ENCODE measurements at regions of chr11 and their contacts with region 1.

Region 1: DNA sequence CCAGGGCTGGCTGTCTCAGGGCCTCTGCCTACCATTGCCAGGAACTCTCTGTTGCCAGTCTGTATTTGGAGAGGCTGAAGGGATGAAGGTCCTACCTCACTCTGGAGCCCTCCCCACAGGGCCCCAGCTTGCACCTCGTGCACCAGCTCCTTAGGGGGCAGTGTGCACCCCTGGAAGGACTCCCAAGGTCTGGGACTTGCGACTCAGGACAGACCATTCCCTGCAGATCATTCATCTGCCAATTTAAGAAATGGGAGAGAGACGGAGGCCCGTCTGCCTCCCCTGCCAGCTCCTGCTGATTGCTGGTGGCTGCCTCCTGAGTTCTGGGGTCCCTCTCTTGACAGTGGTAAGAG is 27.5 kb upstream of the MALAT1 start:
- DNase-seq: peak; percentile 83 to 85
- H3K4me3 ChIP-seq: no peak overlapping the region
- H3K4me3 Mint-ChIP-seq: peak overlapping the region; percentile 56
- H3K27ac Mint-ChIP-seq: peak overlapping the region; percentile 96
- H3K4me1 ChIP-seq: peaks cover 35% of the 10 kb centered on the region
- H3K4me1 Mint-ChIP-seq: peaks cover 7% of the 10 kb centered on the region
- H3K27me3 ChIP-seq: no peaks in the 10 kb centered on the region
- H3K27me3 Mint-ChIP-seq: no peaks in the 10 kb centered on the region
- CTCF ChIP-seq: peak; percentile 72 to 81

Region 2: DNA sequence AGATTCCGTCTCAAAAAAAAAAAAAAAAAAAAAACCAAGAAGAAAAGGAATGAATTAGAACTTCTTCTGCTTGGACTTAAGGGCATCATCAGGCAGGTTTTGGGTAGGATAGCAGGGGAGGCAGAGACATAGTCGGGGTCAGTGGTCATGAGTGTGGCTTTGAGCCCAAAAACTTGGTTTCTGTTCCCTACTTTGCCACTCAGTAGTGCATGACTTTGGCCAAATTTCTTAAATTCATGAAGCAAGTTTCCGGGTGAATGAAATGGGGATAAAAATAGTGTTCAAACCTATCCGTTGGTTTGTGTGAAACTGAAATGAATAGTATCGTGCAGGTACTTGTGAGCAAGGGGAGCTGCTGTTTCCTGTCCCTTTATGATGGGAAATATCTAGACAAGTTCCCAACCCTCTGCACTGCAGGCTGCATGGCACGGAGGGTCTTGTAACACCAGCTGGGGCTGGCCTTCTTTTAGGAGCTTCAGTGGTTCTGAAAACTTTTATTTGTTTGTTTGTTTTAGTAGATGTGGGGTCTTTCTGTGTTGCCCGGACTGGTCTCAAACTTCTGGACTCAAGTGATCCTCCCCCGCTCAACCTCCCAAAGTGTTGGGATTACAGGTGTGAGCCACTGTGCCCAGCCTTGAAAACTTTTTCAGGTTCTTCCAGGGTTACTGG is 30.4 kb before region 1 on chr11:
- CTCF ChIA-PET with region 1: interaction called, 8 read pairs
- POLR2A ChIA-PET with region 1: interaction called, 3 read pairs
- intact Hi-C with region 1: loop called (anchors 1 kb)
- DNase-seq: no peak
- H3K4me3 ChIP-seq: no peak overlapping the region
- H3K4me3 Mint-ChIP-seq: peak overlapping the region; percentile 20
- H3K27ac Mint-ChIP-seq: peak overlapping the region; percentile 91
- H3K4me1 ChIP-seq: peaks cover 37% of the 10 kb centered on the region
- H3K4me1 Mint-ChIP-seq: peaks cover 47% of the 10 kb centered on the region
- H3K27me3 ChIP-seq: no peaks in the 10 kb centered on the region
- H3K27me3 Mint-ChIP-seq: no peaks in the 10 kb centered on the region
- CTCF ChIP-seq: no peak

Region 3: GRCh38 chr11:65487413-65488272 is 16.3 kb after region 1 on chr11:
- CTCF ChIA-PET with region 1: interaction called, 16 read pairs
- POLR2A ChIA-PET with region 1: interaction called, 177 read pairs
- intact Hi-C with region 1: loop called (anchors 1 kb)
- DNase-seq: peak; percentile 99 to 100
- H3K4me3 ChIP-seq: peak overlapping the region; percentile 5
- H3K4me3 Mint-ChIP-seq: peak overlapping the region; percentile 74
- H3K27ac Mint-ChIP-seq: peak overlapping the region; percentile 100
- H3K4me1 ChIP-seq: peaks cover 74% of the 10 kb centered on the region
- H3K4me1 Mint-ChIP-seq: peaks cover 58% of the 10 kb centered on the region
- H3K27me3 ChIP-seq: no peaks in the 10 kb centered on the region
- H3K27me3 Mint-ChIP-seq: no peaks in the 10 kb centered on the region
- CTCF ChIP-seq: no peak

Region 4: GRCh38 chr11:65497141-65498041 is 26.0 kb after region 1 on chr11:
- CTCF ChIA-PET with region 1: interaction called, 31 read pairs
- POLR2A ChIA-PET with region 1: interaction called, 213 read pairs
- intact Hi-C with region 1: loop called (anchors 1 kb)
- DNase-seq: peak; percentile 99
- H3K4me3 ChIP-seq: peak overlapping the region; percentile 81
- H3K4me3 Mint-ChIP-seq: no peak overlapping the region
- H3K27ac Mint-ChIP-seq: no peak overlapping the region
- H3K4me1 ChIP-seq: peaks cover 37% of the 10 kb centered on the region
- H3K4me1 Mint-ChIP-seq: peaks cover 35% of the 10 kb centered on the region
- H3K27me3 ChIP-seq: no peaks in the 10 kb centered on the region
- H3K27me3 Mint-ChIP-seq: peaks cover 3% of the 10 kb centered on the region
- CTCF ChIP-seq: peak in 1 of 2 experiments; percentile 17

Region 5: DNA sequence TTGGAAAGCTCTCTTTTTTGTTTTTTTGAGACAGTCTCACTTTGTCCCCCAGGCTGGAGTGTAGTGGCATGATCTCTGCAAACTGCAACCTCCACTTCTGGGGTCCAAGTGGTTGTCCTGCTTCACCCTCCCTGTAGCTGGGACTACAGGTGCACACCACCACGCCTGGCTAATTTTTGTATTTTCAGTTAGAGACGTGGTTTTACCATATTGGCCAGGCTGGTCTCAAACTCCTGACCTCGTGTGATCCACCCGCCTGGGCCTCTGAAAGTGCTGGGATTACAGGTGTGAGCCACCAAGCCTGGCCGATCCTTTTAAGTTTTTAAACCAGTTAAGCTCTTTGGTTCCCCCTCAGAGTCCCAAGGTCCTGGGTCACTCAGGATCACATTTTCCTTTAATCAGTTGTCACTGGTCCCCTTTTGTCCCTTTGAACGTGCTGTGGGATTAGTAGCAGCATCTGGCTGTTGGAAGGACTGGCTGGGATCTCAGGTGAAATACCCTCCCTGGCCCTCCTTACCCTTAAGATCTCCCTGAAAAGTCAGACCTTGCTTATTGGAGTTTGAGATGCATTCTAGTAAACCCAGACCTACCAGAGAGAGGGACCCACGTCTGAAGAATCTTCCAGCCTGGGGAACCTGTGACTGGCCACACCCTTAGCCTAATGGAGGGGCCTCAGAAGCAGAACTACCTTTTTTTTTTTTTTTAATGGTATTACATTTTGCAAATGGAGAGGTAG is 35.6 kb after region 1 on chr11:
- CTCF ChIA-PET with region 1: interaction called, 52 read pairs
- POLR2A ChIA-PET with region 1: interaction called, 84 read pairs
- intact Hi-C with region 1: loop called (anchors 1 kb)
- DNase-seq: peak; percentile 72 to 89
- H3K4me3 ChIP-seq: no peak overlapping the region
- H3K4me3 Mint-ChIP-seq: no peak overlapping the region
- H3K27ac Mint-ChIP-seq: no peak overlapping the region
- H3K4me1 ChIP-seq: peaks cover 34% of the 10 kb centered on the region
- H3K4me1 Mint-ChIP-seq: peaks cover 62% of the 10 kb centered on the region
- H3K27me3 ChIP-seq: no peaks in the 10 kb centered on the region
- H3K27me3 Mint-ChIP-seq: peaks cover 2% of the 10 kb centered on the region
- CTCF ChIP-seq: no peak

Region 6: DNA sequence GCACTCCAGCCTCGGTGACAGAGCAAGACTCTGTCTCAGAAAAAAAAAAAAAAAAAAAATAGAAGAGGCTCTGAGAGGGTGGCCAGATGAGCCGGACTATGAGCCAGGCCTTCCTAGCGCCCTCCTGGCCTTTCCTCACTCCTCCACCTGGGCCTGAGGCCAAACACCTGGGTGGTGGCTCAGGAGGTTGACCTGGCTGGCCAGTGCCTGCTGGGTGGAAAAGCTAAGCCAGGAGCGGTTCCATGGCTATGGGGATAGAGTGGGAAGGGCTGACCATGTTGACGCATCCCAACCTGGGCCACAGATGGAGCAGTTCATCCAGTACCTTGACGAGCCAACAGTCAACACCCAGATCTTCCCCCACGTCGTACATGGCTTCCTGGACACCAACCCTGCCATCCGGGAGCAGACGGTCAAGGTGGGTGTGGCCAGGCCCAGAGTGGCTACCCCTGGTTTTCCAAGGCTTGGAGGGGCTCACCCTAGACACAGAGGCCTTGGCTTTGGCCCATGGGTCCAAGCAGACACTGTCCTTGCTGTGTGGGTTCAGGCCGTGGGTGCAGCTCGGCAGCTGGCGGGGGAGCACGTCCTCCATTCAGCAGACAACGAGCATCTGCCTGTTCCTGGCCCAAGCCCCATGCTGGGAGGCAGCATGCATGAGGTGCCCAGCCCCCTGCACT is 61.1 kb after region 1 on chr11:
- CTCF ChIA-PET with region 1: no interaction called
- POLR2A ChIA-PET with region 1: no interaction called
- intact Hi-C with region 1: no loop called
- DNase-seq: no peak
- H3K4me3 ChIP-seq: no peak overlapping the region
- H3K4me3 Mint-ChIP-seq: no peak overlapping the region
- H3K27ac Mint-ChIP-seq: no peak overlapping the region
- H3K4me1 ChIP-seq: no peaks in the 10 kb centered on the region
- H3K4me1 Mint-ChIP-seq: peaks cover 6% of the 10 kb centered on the region
- H3K27me3 ChIP-seq: no peaks in the 10 kb centered on the region
- H3K27me3 Mint-ChIP-seq: no peaks in the 10 kb centered on the region
- CTCF ChIP-seq: no peak

Region 7: GRCh38 chr11:65606876-65607613 is 135.7 kb after region 1 on chr11:
- CTCF ChIA-PET with region 1: no interaction called
- POLR2A ChIA-PET with region 1: no interaction called
- intact Hi-C with region 1: no loop called
- DNase-seq: peak; percentile 98 to 99
- H3K4me3 ChIP-seq: peak overlapping the region; percentile 47
- H3K4me3 Mint-ChIP-seq: peak overlapping the region; percentile 67
- H3K27ac Mint-ChIP-seq: peak overlapping the region; percentile 43
- H3K4me1 ChIP-seq: peaks cover 15% of the 10 kb centered on the region
- H3K4me1 Mint-ChIP-seq: peaks cover 16% of the 10 kb centered on the region
- H3K27me3 ChIP-seq: no peaks in the 10 kb centered on the region
- H3K27me3 Mint-ChIP-seq: no peaks in the 10 kb centered on the region
- CTCF ChIP-seq: no peak